ENCODE measurements at regions of chr20 and their contacts with region 1.

Region 1: GRCh38 chr20:50115591-50116372 is 2.8 kb upstream of the UBE2V1 start:
- DNase-seq: peak; percentile 91

Region 2: GRCh38 chr20:50101281-50101680 is 14.5 kb before region 1 on chr20:
- CTCF ChIA-PET with region 1: interaction called, 4 read pairs
- POLR2A ChIA-PET with region 1: interaction called, 50 read pairs
- DNase-seq: no peak

Region 3: DNA sequence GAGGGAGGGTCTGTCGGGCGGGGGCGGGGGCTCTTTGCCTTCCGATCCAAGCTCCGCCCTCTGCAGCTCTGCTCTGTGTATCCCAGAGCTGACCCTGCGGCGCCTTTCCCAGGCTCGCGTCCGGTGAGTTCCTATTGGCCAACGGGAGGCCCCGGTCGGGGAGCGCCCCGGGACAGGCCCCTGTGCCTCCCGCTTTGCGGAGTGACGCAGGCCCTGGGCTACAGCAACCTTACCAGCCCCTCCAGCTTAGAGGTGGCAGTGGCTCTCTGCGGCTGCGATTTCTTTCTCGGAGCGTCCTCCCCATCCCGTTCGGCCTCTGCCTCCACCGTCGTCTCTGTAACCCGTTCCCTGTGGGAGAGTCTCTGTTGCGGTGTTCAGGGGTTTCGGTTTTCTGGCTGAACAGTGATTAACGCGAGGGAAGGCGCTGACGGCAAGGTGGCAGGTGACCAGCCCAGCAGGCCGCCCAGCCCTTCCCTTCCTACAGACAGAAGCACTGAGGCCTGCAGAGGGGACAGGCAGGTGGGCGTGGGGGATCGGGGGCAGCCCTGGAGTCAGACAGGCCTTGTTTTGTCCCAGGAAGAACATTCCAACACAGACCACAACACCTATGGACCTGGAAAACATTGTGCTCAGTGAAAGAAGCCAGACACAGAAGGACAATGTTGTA is 56.7 kb after region 1 on chr20:
- CTCF ChIA-PET with region 1: interaction called, 5 read pairs
- POLR2A ChIA-PET with region 1: interaction called, 16 read pairs
- DNase-seq: peak; percentile 67

Region 4: GRCh38 chr20:50784464-50784863 is 668.7 kb after region 1 on chr20:
- CTCF ChIA-PET with region 1: no interaction called
- POLR2A ChIA-PET with region 1: no interaction called
- DNase-seq: no peak